Head of caudate nucleus (tissue), 42 donors: ENCODE measurements at regions of chr15 and their contacts with region 1.

Region 1: DNA sequence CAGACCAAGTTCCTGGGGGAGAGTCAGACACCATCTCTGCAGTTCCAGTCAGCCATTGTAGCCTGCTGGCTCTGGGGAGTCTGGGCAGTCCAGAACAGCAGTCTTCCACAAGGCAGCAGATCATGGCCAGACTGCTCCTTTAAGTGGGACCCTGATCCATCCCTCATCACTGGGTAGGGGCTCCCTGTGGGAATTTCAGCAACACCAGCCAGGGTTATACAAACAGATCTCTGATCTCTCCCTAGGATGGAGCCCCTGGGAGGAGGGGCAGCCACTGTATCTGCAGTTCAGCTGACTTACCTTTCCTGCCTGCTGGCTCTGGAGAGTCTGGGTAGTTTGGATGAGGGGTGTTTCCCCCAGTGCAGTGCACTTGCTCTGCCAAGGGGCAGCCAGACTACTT is 42.1 kb upstream of the UNC13C start:
- DNase-seq: no peak

Region 2: GRCh38 chr15:53831907-53832770 is 104.0 kb before region 1 on chr15:
- intact Hi-C with region 1: no loop called
- DNase-seq: no peak

Region 3: GRCh38 chr15:53875129-53875528 is 61.0 kb before region 1 on chr15:
- intact Hi-C with region 1: loop called (anchors 5 kb)
- DNase-seq: peak in 1 of 42 donors; percentile 11

Region 4: DNA sequence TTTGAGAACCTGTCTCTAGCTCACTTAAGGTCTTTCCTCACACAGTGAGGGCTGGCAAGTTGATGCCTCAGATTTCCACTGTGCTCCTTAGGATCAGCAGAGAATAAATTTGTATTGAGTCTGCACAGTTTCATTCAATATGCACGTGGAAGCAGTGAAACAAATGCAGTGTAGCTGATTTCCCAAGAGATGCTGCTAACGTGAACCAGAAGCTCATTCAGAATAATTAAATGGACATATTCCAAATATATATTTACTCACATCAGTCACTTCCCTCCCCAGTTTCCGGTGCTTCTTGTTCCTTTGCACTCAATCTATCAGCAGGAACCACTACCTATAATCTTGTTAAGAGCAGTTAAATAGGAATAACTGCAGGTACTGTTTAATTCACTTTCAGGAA is 128.2 kb after region 1 on chr15:
- intact Hi-C with region 1: no loop called
- DNase-seq: no peak

Region 5: GRCh38 chr15:55026381-55026780 is 1090.2 kb after region 1 on chr15:
- intact Hi-C with region 1: no loop called
- DNase-seq: no peak